ENCODE measurements at regions of chr9 and their contacts with region 1.

Region 1: DNA sequence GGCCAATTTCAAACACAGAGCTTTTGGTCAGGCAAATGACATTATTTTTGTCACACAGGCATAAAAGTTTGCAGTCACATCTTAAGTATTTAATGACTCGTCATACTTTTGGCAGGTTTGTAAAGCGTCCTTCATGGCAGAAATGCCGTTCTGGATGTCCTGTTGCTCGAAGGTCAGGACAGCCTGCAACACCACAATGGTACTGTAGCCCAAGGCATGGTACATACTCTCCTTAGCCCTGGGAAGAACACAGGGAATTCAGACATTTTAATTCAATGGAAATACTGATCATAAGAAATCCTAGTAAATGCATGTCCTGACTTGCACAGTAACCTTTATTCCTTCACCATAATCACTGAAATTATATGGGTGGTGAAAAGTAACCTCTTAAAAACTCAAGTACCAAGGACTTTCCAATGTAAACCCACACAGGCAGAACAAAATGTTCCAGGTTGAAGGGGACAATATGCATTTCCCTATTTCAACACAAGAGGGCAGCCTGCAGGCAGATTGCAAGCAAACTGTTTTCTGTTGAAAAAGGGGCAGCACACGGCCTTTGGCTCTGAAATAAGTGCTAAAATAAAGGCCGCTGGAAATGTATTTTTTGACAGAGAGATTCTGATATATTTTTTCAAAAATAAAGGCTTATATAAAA is 95.7 kb downstream of the TTC39B start:
- DNase-seq: peak; percentile 42 to 52
- ATAC-seq: peak; percentile 61

Region 2: DNA sequence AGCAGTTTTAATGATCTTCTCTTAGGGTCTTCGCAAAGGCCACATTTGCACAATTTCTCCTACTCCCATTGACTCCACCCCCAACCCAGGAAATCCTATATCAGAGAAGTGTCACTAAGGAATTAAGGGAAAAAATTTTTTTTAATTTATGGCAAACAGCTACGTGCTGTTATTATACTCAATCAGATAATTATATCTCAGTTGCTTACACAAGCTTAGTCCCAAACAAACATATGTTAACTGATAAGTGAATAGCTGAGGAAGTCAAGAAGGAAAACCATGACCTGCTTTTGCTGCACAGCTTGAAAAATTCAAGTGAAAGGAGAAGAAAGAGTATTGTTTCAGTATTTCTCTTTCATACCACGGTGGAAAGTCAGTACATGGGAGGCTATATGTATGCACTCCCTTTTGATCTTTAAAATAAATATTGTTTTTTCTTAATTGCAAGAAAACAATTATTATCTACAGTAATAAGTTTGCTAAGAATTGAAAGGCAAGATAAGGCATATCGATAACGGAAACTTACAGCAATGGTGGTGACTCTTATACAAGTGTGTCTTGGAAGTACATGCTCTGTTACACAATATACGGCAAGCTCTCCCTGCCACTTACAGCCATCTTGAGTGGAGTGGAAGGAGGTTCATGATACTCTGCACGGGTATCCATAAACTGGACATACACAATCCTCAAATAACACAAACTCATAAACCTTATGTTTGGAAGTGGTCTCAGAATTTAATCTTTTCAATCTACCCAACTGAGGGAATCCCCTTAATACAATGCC is 133.1 kb before region 1 on chr9:
- intact Hi-C with region 1: no loop called
- DNase-seq: no peak
- ATAC-seq: no peak

Region 3: DNA sequence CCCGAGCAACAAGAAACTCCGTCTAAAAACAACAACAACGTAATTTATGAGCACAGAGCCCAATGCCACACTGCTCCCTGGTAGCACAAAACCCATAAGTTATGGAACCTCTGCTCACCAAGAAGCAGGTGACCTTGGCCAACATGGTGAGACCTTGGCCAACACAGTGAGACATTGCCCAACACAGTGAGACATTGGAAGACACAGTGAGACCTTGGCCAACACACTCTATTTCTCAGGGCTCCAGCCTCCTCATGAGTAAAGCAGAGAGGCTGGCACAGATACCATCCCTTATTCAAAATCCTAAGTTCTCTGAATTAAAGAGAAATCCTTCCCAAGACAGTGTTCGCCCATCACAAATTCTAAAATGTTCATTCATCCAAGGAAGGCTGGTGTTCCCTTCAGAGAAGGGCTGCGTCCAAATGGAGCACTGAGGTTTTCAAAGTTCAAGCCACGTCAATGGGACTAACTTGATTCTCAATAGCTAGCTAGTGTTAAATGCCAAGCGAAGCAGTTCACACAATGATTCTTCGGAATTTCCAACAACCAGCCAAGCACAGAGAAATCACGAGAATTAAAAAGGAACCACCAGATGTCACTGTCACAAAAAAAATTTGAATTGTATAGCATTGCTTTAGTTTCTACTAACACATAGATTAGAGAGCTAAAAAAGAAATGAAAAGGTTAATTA is 66.3 kb after region 1 on chr9:
- intact Hi-C with region 1: no loop called
- DNase-seq: no peak
- ATAC-seq: peak; percentile 17

Region 4: GRCh38 chr9:15422372-15423230 is 211.3 kb after region 1 on chr9 and contains the start of gene SNAPC3:
- intact Hi-C with region 1: loop called in 1 of 2 experiments (anchors 5 kb)
- DNase-seq: peak; percentile 96 to 97
- ATAC-seq: peak; percentile 94
- total RNA-seq, gene SNAPC3: 40.2 to 42.5 TPM

Region 5: GRCh38 chr9:15606643-15607472 is 395.6 kb after region 1 on chr9:
- intact Hi-C with region 1: loop called in 1 of 2 experiments (anchors 5 kb)
- DNase-seq: no peak
- ATAC-seq: peak; percentile 34

Measured in left colon (tissue), 2 donors.